IMR-90 (cell line): ENCODE measurements at regions of chr16 and their contacts with region 1.

Region 1: DNA sequence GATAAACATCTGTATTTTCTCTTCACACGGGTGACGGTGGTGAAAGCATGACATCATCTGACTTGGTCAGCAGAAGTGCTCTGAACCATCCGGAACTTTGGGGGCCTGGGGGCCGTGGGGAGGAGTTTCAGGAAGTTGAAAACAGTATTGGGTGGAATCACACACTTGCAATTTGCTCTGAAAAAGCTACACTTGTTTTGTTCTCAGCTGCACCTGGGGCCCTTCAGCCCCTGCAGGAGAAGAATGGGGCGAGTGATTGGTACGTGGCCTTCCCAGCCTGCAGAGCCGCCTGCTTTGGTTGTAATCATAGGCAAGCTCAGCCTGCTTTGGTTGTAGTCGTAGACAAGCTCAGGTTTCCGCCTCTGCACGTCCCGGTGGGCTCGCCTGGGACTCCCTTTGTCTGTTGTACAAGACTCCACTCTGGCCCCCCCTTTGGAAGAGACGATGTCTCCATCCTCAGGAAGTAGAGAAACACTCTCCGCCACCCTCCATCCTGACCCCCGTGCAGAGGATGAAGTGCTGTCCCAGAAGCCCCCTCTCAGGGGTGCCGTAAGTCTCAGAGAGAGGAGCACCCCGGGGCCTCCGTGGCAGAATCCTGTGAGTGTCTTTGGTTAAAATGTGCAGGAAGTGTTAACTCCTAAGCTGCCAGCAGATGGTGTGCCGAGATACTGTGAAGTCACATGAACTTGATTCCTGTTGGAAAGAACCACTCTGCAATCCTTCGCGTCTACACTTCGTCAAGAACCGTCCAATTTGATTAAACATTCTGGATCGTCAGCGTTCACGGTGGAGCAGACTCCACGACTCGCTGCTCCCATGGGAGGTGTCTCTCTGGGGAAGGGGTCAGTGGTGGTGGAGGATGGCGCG is 5.4 kb downstream of the BANP start:
- DNase-seq: peak; percentile 85
- ATAC-seq: peak; percentile 67
- H3K4me3 ChIP-seq: no peak overlapping the region
- H3K27ac ChIP-seq: peak overlapping the region; percentile 55
- H3K4me1 ChIP-seq: peaks cover 24% of the 10 kb centered on the region
- H3K27me3 ChIP-seq: no peaks in the 10 kb centered on the region
- CTCF ChIP-seq: peak; percentile 63
- POLR2A ChIP-seq: peak; percentile 6; the same call in 1 of the 2 replicates
- RAD21 ChIP-seq: peak; percentile 74

Region 2: DNA sequence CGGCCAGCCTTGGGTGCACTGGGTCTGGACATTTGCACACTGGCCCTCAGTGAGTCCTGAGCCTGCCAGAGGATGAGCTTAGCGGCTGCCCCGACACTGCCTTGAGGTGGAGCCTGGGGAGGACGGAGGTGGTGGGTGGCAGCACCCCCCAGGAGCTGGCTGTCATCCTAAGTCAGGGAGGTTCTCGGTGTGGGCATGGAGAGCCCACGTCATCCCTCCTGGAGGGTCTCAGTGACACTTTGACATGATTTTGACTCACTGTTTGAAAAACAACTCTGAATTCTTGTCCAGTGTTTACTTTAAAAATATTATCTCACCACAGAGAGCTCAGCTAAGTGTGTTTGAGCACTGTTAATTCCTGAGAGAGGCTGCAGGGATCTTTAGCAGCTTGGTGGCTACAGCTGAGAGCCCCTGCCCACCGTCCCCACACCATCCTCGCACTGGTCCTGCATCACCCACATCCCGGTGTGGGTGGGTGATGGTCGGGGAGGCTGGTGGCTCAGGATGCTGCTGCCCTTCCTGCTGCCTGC is 57.7 kb after region 1 on chr16:
- CTCF ChIA-PET with region 1: no interaction called
- POLR2A ChIA-PET with region 1: interaction called, 3 read pairs
- dilution Hi-C with region 1: no loop called
- in situ Hi-C with region 1: no loop called
- intact Hi-C with region 1: loop called (anchors 2 kb)
- DNase-seq: peak; percentile 77
- ATAC-seq: peak; percentile 89
- H3K4me3 ChIP-seq: no peak overlapping the region
- H3K27ac ChIP-seq: peak overlapping the region; percentile 75
- H3K4me1 ChIP-seq: peaks cover 23% of the 10 kb centered on the region
- H3K27me3 ChIP-seq: no peaks in the 10 kb centered on the region
- CTCF ChIP-seq: no peak
- POLR2A ChIP-seq: no peak
- RAD21 ChIP-seq: no peak

Region 3: GRCh38 chr16:88063211-88063773 is 106.7 kb after region 1 on chr16:
- CTCF ChIA-PET with region 1: no interaction called
- POLR2A ChIA-PET with region 1: no interaction called
- dilution Hi-C with region 1: no loop called
- in situ Hi-C with region 1: no loop called
- intact Hi-C with region 1: loop called (anchors 1 kb)
- DNase-seq: peak; percentile 85
- ATAC-seq: peak; percentile 78
- H3K4me3 ChIP-seq: no peak overlapping the region
- H3K27ac ChIP-seq: peak overlapping the region; percentile 90
- H3K4me1 ChIP-seq: peaks cover 26% of the 10 kb centered on the region
- H3K27me3 ChIP-seq: no peaks in the 10 kb centered on the region
- CTCF ChIP-seq: peak; percentile 43
- POLR2A ChIP-seq: no peak
- RAD21 ChIP-seq: peak; percentile 54

Region 4: DNA sequence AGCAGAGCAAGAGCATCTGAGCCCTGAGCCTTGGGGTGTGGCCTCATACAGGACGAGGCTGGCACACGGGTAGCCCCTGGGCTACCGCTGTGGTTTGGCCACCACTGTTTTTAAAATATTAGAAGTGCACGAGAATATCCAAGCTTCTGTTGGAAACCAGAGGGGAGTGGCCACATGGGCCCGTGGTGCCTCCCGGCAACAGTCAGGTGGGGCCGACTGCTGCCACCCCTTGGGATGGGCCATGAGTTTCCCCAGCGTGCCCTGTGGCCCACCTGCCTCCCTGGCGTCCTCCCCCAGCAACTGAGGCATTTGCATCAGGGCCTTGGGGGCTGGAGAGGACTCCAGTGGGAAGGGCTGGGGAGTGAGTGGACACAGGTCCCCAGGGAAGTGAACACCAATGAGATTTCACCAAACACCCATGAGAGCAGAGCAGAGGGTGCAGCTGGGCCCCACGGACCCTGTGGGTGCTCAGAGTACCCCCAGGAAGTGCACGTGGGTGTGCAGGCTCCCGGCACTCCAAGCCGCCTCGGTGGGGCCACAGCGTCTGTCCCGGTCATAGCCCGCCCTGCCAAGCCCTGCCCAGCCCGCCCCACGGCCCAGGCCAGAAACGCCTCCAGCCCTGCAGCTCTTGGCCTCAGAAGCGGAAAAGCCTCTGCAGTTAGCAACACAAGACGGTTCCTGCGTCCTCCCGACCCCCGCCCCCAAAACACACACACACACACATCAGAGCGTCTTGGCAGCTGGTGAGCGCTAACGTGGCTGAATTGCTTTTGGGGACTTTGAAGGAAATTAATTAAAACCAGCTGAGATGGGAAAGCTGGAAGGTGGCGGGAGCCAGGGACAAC is 448.8 kb after region 1 on chr16:
- CTCF ChIA-PET with region 1: no interaction called
- POLR2A ChIA-PET with region 1: no interaction called
- dilution Hi-C with region 1: no loop called
- in situ Hi-C with region 1: no loop called
- intact Hi-C with region 1: no loop called
- DNase-seq: peak; percentile 46
- ATAC-seq: peak; percentile 48; the same call in 1 of the 2 replicates
- H3K4me3 ChIP-seq: no peak overlapping the region
- H3K27ac ChIP-seq: peak overlapping the region; percentile 42; the same call in 1 of the 2 replicates
- H3K4me1 ChIP-seq: peaks cover 22% of the 10 kb centered on the region; the same call in 1 of the 2 replicates
- H3K27me3 ChIP-seq: no peaks in the 10 kb centered on the region
- CTCF ChIP-seq: no peak
- POLR2A ChIP-seq: no peak
- RAD21 ChIP-seq: no peak